GM12878 (cell line): ENCODE measurements at regions of chr10 and their contacts with region 1.

Region 1: DNA sequence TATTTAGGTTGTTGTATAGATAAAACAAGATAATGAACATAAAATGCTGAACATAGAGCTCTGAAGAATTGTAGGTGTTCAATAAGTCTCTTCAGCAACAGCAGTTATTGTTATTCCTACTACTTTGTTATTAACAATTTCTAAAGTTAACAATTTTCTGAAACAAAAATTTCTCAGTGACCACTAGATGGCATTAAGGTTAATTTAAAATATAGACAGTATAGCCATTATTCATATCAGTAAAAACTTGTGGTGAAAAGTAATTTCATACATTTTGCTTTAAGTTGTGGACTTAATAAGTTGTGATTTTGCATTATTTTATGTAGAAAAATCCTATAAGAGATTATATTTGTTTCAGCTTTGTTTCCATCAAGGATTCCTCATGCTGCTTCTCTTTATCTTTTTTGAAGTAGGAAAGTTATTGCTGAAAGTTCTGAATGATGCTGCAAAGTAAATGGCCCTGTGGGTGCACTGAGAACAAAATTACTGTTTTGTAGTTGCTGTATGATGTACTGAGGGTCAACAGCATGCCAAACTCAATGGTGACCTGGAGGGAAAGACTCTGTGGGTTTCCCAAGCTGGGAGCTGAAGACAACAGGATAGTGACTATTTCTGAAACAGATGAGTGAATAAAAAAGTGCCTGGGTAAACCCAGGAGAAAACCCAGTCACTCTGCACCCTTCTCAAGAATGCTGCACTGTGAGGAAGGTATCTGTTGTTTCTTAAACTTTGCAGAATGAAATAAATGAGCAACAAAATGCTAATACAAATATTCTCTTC is 253.6 kb downstream of the KIF20B start:
- DNase-seq: peak; percentile 21
- ATAC-seq: peak; percentile 38
- H3K4me3 ChIP-seq: no peak overlapping the region
- H3K27ac ChIP-seq: no peak overlapping the region
- H3K4me1 ChIP-seq: no peaks in the 10 kb centered on the region
- H3K27me3 ChIP-seq: no peaks in the 10 kb centered on the region
- CTCF ChIP-seq: peak in 1 of 3 experiments; percentile 26; a peak in 1 of 6 replicates
- EP300 ChIP-seq: no peak
- POLR2A ChIP-seq: no peak
- RAD21 ChIP-seq: peak; percentile 22; the same call in 1 of the 2 replicates

Region 2: GRCh38 chr10:90047243-90047729 is 92.3 kb after region 1 on chr10:
- CTCF ChIA-PET with region 1: interaction called, 3 read pairs
- POLR2A ChIA-PET with region 1: no interaction called
- RAD21 ChIA-PET with region 1: no interaction called
- SMC1A ChIA-PET with region 1: interaction called, 6 read pairs
- in situ Hi-C with region 1: no loop called
- intact Hi-C with region 1: loop called (anchors 1 kb)
- DNase-seq: peak; percentile 90
- ATAC-seq: peak; percentile 77
- H3K4me3 ChIP-seq: no peak overlapping the region
- H3K27ac ChIP-seq: peak overlapping the region; percentile 84
- H3K4me1 ChIP-seq: peaks cover 22% of the 10 kb centered on the region
- H3K27me3 ChIP-seq: no peaks in the 10 kb centered on the region
- CTCF ChIP-seq: no peak
- EP300 ChIP-seq: peak; percentile 93
- POLR2A ChIP-seq: no peak
- RAD21 ChIP-seq: no peak

Region 3: DNA sequence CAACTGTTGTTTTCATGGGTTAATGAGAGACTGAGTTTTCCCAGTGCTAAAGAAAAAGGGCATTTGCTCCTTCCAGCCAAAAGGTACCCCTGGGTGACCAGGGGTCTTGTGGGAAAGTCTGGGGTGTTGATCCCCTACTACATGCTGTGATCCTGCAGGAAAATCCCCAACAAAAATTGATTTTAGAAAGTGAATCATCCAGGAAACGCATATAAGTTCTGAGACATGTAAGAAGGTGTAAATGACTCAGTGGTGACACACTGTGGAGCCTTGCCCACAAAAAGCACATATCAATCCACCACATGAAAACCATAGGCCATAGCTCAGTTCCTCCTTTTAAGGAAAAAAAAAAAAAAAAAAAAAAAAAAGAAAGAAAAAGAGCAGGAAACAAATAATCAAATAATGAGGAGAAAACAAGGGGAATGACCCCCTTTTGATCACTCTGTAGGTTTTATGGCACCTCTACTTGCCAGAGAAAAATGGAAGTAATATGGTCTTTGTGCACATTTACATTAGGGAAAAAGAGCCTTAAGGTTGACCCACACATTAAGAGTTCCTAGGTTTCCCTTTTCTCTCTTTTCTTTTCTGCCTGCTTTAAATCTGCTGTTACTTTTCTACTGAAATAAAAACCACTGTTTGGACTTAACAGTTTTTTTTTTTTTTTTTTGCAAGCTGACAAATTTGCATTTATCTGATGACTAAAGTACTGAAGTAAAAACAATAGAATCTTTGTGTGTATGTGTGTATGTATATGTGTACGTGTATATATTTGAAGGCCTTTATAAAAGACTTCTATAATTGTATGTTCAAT is 132.4 kb after region 1 on chr10:
- CTCF ChIA-PET with region 1: interaction called, 28 read pairs
- POLR2A ChIA-PET with region 1: no interaction called
- RAD21 ChIA-PET with region 1: interaction called, 12 read pairs
- SMC1A ChIA-PET with region 1: interaction called, 19 read pairs
- in situ Hi-C with region 1: no loop called
- intact Hi-C with region 1: loop called (anchors 2 kb)
- DNase-seq: peak; percentile 69
- ATAC-seq: peak; percentile 100
- H3K4me3 ChIP-seq: no peak overlapping the region
- H3K27ac ChIP-seq: peak overlapping the region; percentile 73
- H3K4me1 ChIP-seq: peaks cover 9% of the 10 kb centered on the region
- H3K27me3 ChIP-seq: no peaks in the 10 kb centered on the region
- CTCF ChIP-seq: peak in 1 of 3 experiments; percentile 22; a peak in 1 of 6 replicates
- EP300 ChIP-seq: peak; percentile 82 to 83; a peak in 3 of 4 replicates
- POLR2A ChIP-seq: no peak
- RAD21 ChIP-seq: peak; percentile 54

Region 4: GRCh38 chr10:90138844-90139243 is 183.9 kb after region 1 on chr10:
- CTCF ChIA-PET with region 1: interaction called, 6 read pairs
- POLR2A ChIA-PET with region 1: no interaction called
- RAD21 ChIA-PET with region 1: interaction called, 6 read pairs
- SMC1A ChIA-PET with region 1: interaction called, 10 read pairs
- in situ Hi-C with region 1: no loop called
- intact Hi-C with region 1: loop called (anchors 2 kb)
- DNase-seq: no peak
- ATAC-seq: no peak
- H3K4me3 ChIP-seq: no peak overlapping the region
- H3K27ac ChIP-seq: no peak overlapping the region
- H3K4me1 ChIP-seq: no peaks in the 10 kb centered on the region
- H3K27me3 ChIP-seq: no peaks in the 10 kb centered on the region
- CTCF ChIP-seq: peak in 2 of 3 experiments; percentile 43 to 44; a peak in 3 of 6 replicates
- EP300 ChIP-seq: no peak
- POLR2A ChIP-seq: no peak
- RAD21 ChIP-seq: peak; percentile 42

Region 5: DNA sequence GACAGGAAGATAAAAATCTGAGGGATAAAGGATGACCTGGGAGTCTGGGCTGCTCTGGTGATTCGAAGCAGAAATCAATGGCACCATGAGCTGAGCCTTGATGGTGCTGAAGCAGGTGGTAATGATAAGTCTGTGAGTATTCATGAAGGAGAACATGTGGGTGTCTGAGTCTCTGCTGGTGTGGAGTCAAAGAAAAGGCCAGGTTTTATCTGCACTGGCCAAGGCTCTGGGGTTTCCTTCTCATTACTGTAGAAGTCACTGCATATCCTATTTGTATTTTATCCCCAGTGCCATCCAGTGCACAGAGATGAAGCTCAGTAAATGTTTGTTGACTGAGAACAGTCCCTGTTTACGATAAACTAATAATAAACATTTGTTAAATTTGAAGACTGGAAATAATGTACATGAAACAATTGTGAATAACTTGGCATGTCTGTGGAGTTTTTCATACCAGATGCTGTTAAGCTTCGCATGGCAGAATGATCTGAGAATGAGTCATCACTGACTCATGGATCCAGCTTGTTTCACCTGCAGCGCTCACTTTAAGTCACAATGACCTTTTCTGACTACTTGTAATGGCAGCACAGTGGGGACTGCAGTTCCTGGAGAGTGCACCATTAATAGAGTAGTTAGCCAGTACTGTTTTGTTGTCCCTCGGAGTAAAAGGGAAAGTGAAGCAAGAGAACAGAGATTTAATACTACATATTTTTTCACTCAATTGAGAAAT is 364.4 kb after region 1 on chr10:
- CTCF ChIA-PET with region 1: no interaction called
- POLR2A ChIA-PET with region 1: no interaction called
- RAD21 ChIA-PET with region 1: interaction called, 3 read pairs
- SMC1A ChIA-PET with region 1: no interaction called
- in situ Hi-C with region 1: no loop called
- intact Hi-C with region 1: loop called (anchors 10 kb)
- DNase-seq: peak; percentile 48
- ATAC-seq: peak; percentile 98
- H3K4me3 ChIP-seq: no peak overlapping the region
- H3K27ac ChIP-seq: no peak overlapping the region
- H3K4me1 ChIP-seq: no peaks in the 10 kb centered on the region
- H3K27me3 ChIP-seq: no peaks in the 10 kb centered on the region
- CTCF ChIP-seq: no peak
- EP300 ChIP-seq: peak in 1 of 2 experiments; percentile 52; a peak in 1 of 4 replicates
- POLR2A ChIP-seq: no peak
- RAD21 ChIP-seq: no peak

Region 6: DNA sequence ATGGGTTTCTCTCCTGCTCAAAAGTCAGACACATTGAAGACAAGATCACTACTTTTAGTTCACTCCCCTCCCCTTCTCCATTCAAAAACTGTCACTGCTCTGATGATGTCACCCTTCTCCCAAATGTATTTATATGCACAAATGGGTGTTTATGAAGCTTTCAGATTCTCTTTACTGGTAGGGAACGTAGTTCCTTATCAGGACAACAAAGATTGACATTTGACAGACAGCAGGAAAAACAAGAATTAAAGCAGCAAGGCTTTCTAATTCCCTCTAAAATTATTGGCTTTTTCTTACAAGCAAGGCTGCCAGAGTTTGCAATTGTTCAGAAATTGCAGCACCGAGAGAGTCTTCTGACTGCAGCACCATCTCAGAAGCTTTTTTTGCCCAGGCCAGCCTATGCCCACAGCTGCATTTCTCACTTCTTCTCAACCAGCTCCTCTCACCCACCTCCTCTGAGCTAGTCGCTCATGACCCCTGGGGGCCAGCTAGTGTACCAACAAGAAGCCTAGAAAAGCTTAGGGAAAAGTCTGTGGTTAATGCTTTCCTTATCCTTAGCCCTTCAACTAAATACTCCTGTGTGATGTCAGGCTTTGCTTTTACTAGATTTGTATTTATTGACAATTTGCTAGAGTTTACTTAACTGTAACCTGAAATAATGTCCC is 637.8 kb after region 1 on chr10:
- CTCF ChIA-PET with region 1: no interaction called
- POLR2A ChIA-PET with region 1: no interaction called
- RAD21 ChIA-PET with region 1: no interaction called
- SMC1A ChIA-PET with region 1: interaction called, 4 read pairs
- in situ Hi-C with region 1: no loop called
- intact Hi-C with region 1: loop called (anchors 10 kb)
- DNase-seq: peak; percentile 8
- ATAC-seq: peak; percentile 94
- H3K4me3 ChIP-seq: no peak overlapping the region
- H3K27ac ChIP-seq: no peak overlapping the region
- H3K4me1 ChIP-seq: no peaks in the 10 kb centered on the region
- H3K27me3 ChIP-seq: no peaks in the 10 kb centered on the region
- CTCF ChIP-seq: peak; percentile 51 to 56 (median 51)
- EP300 ChIP-seq: no peak
- POLR2A ChIP-seq: no peak
- RAD21 ChIP-seq: peak; percentile 80

Region 7: GRCh38 chr10:90862908-90863514 is 908.0 kb after region 1 on chr10:
- CTCF ChIA-PET with region 1: no interaction called
- POLR2A ChIA-PET with region 1: no interaction called
- RAD21 ChIA-PET with region 1: no interaction called
- SMC1A ChIA-PET with region 1: no interaction called
- in situ Hi-C with region 1: no loop called
- intact Hi-C with region 1: loop called (anchors 10 kb)
- DNase-seq: no peak
- ATAC-seq: peak; percentile 23; the same call in 1 of the 3 replicates
- H3K4me3 ChIP-seq: no peak overlapping the region
- H3K27ac ChIP-seq: no peak overlapping the region
- H3K4me1 ChIP-seq: no peaks in the 10 kb centered on the region
- H3K27me3 ChIP-seq: no peaks in the 10 kb centered on the region; a peak in 2 of 4 replicates
- CTCF ChIP-seq: peak; percentile 58 to 69 (median 66)
- EP300 ChIP-seq: no peak
- POLR2A ChIP-seq: no peak
- RAD21 ChIP-seq: peak; percentile 76